Dorsolateral prefrontal cortex (tissue), 120 donors: ENCODE measurements at regions of chr12 and their contacts with region 1.

Region 1: DNA sequence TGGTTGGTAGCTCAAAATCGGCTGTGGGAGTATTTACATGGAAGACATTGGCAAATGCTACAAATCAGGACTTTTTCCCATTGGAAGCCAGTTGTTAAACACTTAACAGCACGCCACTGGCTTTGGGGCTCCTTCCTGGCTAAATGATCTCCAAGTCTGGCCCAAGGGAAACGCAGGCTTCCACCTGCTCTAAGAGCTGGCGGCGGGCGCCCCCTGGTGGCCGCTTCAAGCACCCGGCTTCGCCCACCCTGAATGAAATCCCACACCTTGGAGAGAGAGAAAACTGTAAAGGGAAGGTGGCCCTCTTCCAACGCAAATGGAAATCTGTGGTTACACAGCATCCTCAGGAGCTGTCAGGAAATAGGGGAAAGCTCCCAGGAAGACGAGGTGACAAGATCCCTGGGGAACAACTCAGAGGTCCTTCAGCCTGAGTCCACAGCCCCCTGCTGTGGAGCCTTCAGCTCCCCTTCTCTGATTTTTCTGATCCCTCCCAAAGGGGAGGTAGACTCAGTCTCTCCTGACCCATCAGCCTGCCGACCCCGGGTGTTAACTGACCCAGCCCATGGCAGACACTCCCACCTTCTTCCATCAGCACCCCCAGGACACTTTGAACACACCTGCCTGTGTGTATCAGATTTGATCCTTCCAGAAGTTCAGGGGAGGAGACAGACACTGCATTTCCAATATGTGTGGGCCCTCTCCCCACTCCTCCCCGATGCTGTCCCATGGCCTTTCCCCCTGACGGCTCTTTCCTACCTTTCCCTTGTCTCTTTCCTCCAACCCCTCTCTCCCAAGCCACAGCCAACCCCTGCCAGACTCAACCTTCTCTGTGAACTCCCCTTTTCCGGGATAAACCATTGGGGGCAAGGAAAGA is 15.4 kb downstream of the SELPLG start:
- DNase-seq: peak; percentile 67 to 87 (median 78)
- H3K4me3 ChIP-seq: no peak overlapping the region
- H3K27ac ChIP-seq: peak overlapping the region in 7 of 59 donors; percentile 0 to 28 (median 13)
- H3K27me3 ChIP-seq: no peaks in the 10 kb centered on the region
- CTCF ChIP-seq: peak; percentile 93 to 100 (median 99)

Region 2: GRCh38 chr12:107912421-107913004 is 705.8 kb before region 1 on chr12:
- intact Hi-C with region 1: loop called in 1 of 2 experiments (anchors 10 kb)
- DNase-seq: peak in 8 of 10 donors; percentile 4 to 52 (median 37)
- H3K4me3 ChIP-seq: peak overlapping the region in 14 of 59 donors; percentile 4 to 42 (median 18)
- H3K27ac ChIP-seq: no peak overlapping the region
- H3K27me3 ChIP-seq: peaks cover 0 to 65% (median 30%) of the 10 kb centered on the region in 45 donors
- CTCF ChIP-seq: peak in 52 of 56 donors; percentile 25 to 66 (median 48)

Region 3: DNA sequence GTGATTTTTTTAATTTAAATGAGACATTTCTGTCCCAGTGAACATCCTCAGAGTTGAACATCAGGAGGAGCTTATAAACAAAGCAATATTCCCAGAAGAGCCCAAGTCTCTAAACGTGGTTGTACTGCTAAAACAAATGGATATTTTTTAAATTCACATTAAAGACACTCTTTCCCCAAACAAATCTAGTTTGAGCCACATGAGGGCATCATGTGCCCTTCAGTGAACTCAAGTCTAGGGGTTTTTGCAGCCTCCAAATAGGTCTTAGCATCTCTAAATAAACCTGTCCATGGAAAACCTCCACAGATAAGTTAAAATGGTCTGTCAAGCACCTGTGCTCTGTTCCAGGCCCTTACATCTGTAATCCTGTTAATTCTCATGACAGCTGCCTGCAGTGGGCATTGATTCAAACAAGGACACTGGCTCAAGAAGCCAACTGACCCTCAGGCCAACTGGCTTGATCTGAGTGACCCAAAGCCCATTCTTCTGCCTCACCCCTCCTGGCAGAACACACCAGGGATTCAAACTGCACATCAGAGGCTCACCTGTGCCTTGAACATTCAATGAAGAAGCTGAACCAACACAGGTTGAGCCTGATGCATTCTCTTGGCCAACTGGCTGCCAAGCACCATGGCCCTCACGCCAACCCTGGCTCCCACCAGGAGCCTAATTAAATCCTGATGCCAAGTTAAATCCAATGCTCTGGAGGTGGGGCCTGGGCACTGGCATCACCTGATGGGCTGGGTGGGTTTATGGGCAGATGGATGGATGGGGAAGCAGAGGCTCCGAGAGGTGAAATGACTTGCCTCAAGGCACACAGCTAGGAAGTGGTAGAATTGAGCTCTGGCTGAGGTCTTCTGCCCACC is 47.3 kb before region 1 on chr12:
- intact Hi-C with region 1: loop called (anchors 2 kb)
- DNase-seq: peak in 1 of 10 donors; percentile 24
- H3K4me3 ChIP-seq: no peak overlapping the region
- H3K27ac ChIP-seq: peak overlapping the region in 20 of 59 donors; percentile 4 to 52 (median 26)
- H3K27me3 ChIP-seq: no peaks in the 10 kb centered on the region
- CTCF ChIP-seq: peak in 50 of 56 donors; percentile 20 to 66 (median 44)